Calu3 (cell line): ENCODE measurements at regions of chr10 and their contacts with region 1.

Region 1: DNA sequence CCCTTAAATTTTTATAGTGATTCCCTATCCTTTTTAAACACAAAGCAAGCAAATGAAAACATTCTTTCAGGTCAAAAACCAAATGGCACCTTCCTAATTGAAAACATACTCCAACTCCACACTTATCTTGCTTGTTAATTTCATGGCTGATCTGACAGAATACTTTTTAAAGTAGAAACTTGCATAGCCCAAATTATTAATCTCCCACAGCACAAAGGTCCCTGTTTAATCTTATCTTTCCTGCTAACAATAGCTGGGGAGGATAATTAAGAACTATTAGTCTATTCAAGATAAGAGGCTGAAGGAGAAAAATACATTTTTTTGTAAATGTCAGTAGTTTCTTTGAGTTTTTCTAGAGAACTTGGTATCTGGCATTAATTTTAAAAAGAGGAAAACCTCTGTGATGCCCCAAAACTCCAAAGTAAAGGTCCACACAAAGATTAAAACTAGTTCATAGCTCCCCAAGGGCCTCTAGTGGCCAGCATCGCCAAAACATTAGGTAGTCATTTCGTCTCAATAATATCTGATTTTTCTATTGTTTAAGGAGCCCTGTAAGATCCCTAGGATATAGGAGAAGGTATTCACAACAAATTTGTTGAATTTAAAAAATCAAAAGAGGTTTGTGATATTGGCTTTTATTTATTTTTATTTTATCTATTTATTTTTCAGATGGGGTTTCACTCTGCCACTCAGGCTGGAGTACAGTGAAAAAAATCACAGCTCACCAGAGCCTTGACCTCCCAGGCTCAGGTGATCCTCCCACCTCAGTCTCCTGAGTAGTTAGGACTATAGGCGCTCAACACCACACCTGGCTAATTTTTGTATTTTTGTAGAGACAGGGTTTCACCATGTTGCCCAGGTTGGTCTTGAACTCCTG is 14.7 kb downstream of the CDNF start:
- DNase-seq: peak; percentile 49
- H3K4me3 Mint-ChIP-seq: no peak overlapping the region
- H3K27ac Mint-ChIP-seq: peak overlapping the region; percentile 38
- H3K4me1 Mint-ChIP-seq: peaks cover 26% of the 10 kb centered on the region
- H3K27me3 Mint-ChIP-seq: no peaks in the 10 kb centered on the region
- CTCF ChIP-seq: no peak

Region 2: GRCh38 chr10:14429043-14429700 is 393.9 kb before region 1 on chr10:
- CTCF ChIA-PET with region 1: no interaction called
- intact Hi-C with region 1: no loop called
- DNase-seq: no peak
- H3K4me3 Mint-ChIP-seq: no peak overlapping the region
- H3K27ac Mint-ChIP-seq: no peak overlapping the region
- H3K4me1 Mint-ChIP-seq: no peaks in the 10 kb centered on the region
- H3K27me3 Mint-ChIP-seq: peaks cover 42% of the 10 kb centered on the region
- CTCF ChIP-seq: no peak

Region 3: DNA sequence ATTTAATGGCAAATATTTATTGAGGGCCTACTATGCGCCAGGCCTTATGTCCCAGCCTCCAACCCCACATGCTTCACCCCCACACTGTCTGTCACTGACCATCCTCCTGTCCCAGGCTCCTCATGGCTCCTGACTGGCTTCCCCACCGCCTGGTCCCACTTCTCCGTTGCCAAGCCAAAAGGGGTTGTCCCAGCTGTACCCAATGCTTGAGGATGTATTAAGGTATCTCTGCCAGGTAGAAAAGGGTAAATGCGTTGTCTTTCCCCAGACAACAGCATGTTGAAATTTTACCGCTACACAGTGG is 323.6 kb before region 1 on chr10:
- CTCF ChIA-PET with region 1: interaction called, 7 read pairs
- intact Hi-C with region 1: loop called (anchors 1 kb)
- DNase-seq: no peak
- H3K4me3 Mint-ChIP-seq: no peak overlapping the region
- H3K27ac Mint-ChIP-seq: no peak overlapping the region
- H3K4me1 Mint-ChIP-seq: no peaks in the 10 kb centered on the region
- H3K27me3 Mint-ChIP-seq: no peaks in the 10 kb centered on the region
- CTCF ChIP-seq: no peak

Region 4: DNA sequence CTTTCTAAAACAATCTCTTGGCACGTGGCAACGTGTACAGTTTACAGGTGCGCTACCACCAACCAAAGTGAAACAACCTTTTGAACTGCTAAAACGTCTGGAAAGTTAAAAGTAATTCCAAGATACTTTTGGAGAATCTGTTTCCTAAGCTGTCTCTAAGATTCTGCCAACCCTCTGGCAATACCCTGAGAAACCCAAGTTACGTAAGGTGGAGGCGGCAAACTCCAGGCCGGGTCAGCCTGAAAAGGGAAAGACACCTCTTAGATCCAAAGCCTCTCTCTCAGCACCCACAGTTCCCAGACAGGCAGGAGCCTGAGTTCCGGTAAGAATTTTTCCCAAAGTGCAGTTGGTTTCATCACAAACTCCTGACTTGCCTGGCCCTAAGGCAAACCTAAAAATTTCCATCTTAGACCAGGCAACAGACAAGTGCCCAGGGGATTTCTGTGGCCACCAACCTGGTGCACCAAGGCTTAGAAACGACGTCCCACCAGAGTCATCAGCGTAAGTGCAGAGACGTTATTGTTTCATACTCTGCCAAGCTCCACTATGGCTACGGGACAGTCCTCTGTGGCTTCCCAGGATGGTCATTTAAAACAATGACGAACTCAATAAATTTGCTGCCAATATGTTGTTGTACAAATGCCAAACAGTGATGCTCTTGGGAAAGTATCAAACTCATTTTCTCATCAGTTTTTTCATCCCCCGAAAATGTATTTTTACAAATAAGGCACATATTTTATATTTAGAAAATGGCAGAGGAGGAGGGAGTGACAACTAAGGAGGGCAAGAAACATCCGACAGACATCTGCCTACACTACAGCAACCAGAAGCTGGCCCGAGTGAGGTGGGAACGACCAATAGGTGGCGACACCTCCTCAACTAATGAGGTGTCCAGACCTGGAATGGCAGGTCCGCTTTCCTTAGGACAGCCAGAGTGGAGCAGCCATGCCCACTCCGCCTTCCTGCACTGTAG is 286.6 kb before region 1 on chr10:
- CTCF ChIA-PET with region 1: interaction called, 3 read pairs
- intact Hi-C with region 1: loop called (anchors 5 kb)
- DNase-seq: peak; percentile 75
- H3K4me3 Mint-ChIP-seq: no peak overlapping the region
- H3K27ac Mint-ChIP-seq: no peak overlapping the region
- H3K4me1 Mint-ChIP-seq: peaks cover 44% of the 10 kb centered on the region
- H3K27me3 Mint-ChIP-seq: no peaks in the 10 kb centered on the region
- CTCF ChIP-seq: peak; percentile 53

Region 5: DNA sequence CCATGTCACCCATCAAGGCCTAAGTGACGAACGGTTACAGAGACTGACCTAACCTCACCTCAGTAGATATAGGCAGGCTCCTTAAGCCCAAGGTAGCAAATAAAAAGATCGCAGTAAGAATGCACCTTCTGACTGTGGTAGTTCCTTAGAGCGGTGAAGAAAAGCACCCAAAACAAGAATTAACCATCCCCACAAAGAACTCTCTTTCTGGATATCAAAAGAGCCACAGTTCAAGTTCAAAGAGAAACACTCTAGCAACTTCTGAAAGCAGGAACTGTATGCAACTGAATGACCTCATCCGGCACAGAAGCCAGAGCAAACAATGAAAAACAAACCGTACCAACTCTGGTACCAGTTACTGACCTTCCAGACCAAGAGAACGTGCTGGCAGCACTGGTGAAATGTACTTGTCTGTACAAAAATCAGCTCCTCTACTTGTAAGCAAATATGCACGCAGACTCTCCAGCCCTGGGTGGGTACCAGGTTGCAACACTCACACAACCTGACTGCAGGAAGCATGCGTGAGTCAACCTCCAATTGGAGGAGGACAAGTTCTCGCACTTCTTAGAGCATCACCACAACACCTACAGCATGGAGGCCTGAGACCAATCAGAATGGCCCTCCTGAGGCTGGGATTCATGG is 251.1 kb before region 1 on chr10:
- CTCF ChIA-PET with region 1: no interaction called
- intact Hi-C with region 1: loop called (anchors 10 kb)
- DNase-seq: peak; percentile 73
- H3K4me3 Mint-ChIP-seq: peak overlapping the region; percentile 20
- H3K27ac Mint-ChIP-seq: peak overlapping the region; percentile 83
- H3K4me1 Mint-ChIP-seq: peaks cover 34% of the 10 kb centered on the region
- H3K27me3 Mint-ChIP-seq: no peaks in the 10 kb centered on the region
- CTCF ChIP-seq: no peak

Region 6: GRCh38 chr10:14670551-14671240 is 152.4 kb before region 1 on chr10:
- CTCF ChIA-PET with region 1: no interaction called
- intact Hi-C with region 1: loop called (anchors 1 kb)
- DNase-seq: no peak
- H3K4me3 Mint-ChIP-seq: no peak overlapping the region
- H3K27ac Mint-ChIP-seq: no peak overlapping the region
- H3K4me1 Mint-ChIP-seq: peaks cover 68% of the 10 kb centered on the region
- H3K27me3 Mint-ChIP-seq: no peaks in the 10 kb centered on the region
- CTCF ChIP-seq: no peak